ENCODE measurements at regions of chr7 and their contacts with region 1.

Region 1: DNA sequence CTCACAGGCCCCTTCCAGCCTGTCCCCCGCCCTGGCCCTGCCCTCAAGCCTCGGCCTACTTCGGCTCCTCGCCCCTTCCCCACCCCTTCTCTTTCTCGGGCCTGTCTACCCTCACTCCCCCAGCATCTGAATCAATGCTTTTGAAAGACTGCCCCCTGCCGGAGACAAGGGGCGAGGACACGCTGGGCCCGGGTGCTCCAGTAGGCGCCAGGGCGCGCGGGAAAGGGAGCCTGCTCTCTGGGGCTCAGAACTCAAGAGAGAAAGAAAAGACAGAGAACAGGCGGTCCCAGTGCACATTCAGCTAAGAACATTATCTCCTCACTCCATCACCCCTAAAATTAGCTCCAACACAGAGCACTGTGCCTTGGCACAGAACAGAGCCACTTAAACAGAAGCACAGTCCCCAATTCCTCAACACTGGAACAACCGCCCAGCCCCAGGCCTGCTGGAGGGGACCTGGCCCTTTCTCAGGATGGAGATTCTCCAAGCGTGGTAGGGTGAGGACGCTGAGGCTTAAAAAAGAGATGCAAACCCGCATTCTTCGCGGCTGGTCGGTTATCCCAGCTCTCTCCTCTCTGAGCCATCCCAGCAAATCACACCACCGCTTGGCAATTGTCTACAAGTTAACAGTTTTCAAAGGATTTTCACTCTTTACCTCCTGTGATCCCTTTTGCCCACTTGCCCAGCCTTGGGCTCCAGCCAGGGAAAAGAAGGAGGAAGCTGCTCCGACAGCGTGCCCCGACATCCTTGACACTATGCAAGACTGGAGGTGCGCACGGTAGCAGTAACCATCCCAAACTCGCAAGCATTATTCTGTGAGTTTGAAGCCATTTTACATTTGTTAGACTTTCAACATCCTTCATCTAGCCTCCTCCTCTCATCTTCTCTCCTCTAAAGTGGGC is 2.1 kb downstream of the GIGYF1 start:
- DNase-seq: peak; percentile 74
- H3K4me3 Mint-ChIP-seq: peak overlapping the region; percentile 94
- H3K27ac Mint-ChIP-seq: peak overlapping the region; percentile 45
- H3K4me1 Mint-ChIP-seq: peaks cover 27% of the 10 kb centered on the region
- H3K27me3 Mint-ChIP-seq: peaks cover 16% of the 10 kb centered on the region

Region 2: DNA sequence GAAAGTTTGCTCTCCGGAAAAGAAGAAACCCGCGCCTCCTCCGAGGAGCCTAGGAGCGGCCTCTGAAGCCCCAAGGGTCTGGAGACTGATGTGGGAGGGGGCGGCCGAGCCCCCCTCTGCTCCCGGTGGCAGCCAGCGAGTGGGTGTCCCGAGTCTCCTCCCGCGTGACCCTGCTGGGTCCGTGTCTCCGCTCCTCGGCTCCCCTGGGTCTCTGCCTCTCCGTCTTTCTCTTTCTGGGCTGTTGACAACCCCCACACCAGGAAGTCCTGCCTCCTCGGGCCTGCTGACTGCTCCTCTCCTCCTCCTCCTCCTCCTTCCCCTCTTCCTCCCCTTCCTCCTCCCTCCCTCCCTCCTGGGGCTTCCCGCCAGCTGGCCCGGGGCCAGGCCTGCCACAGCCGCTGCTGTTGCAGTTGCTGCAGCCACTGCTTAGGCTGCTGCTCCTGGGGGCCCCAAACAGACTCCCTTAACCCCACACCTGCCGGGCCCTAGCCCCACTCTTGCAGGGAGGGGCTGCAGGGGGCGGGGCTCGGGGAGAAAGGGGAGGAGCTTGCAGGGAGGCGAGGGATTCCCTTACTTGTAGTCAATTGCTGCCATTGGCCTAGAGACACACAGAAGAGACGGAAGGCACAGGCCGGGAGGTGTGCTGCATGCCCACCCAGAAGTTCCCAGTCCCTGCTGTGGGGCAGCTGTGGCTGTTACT is 212.8 kb before region 1 on chr7 and contains the start of gene TSC22D4:
- intact Hi-C with region 1: loop called (anchors 5 kb)
- DNase-seq: peak; percentile 85
- H3K4me3 Mint-ChIP-seq: peak within 1 kb of the TSS; percentile 99
- H3K27ac Mint-ChIP-seq: peak within 1 kb of the TSS; percentile 93
- H3K4me1 Mint-ChIP-seq: peaks cover 35% of the 10 kb centered on the region
- H3K27me3 Mint-ChIP-seq: peaks cover 6% of the 10 kb centered on the region
- total RNA-seq, gene TSC22D4: 126 and 134 TPM in 2 replicates

Region 3: DNA sequence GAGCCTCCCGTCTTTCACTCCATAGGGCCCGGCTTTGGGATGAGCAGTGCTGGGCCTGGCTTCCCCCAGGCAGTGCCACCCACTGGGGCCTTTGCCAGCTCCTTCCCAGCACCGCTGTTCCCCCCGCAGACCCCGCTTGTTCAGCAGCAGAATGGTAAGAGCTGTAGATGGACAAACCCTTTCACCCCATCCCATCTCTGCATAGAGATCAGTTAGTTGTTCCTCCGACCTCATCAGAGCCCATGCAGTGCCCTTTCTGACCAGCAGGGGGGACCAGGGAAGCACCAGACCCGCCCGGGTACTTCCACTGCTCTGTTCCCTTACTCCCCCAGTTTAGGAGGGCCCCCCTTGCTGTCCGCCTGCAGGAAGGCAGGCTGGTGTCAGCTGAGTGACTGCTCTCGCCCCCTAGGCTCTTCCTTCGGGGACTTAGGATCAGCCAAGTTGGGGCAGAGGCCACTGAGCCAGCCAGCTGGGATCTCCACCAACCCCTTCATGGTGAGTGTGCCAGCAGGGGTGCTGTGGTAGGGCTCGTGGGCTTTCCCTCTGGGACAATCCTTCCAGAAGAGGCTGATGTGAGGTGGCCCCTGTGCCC is 128.0 kb before region 1 on chr7:
- intact Hi-C with region 1: loop called (anchors 1 kb)
- DNase-seq: peak; percentile 69
- H3K4me3 Mint-ChIP-seq: no peak overlapping the region
- H3K27ac Mint-ChIP-seq: peak overlapping the region; percentile 24
- H3K4me1 Mint-ChIP-seq: peaks cover 33% of the 10 kb centered on the region
- H3K27me3 Mint-ChIP-seq: no peaks in the 10 kb centered on the region

Region 4: GRCh38 chr7:100604028-100604975 is 87.6 kb before region 1 on chr7:
- intact Hi-C with region 1: loop called (anchors 1 kb)
- DNase-seq: peak; percentile 61
- H3K4me3 Mint-ChIP-seq: peak overlapping the region; percentile 81
- H3K27ac Mint-ChIP-seq: peak overlapping the region; percentile 84
- H3K4me1 Mint-ChIP-seq: peaks cover 15% of the 10 kb centered on the region
- H3K27me3 Mint-ChIP-seq: peaks cover 13% of the 10 kb centered on the region

Region 5: DNA sequence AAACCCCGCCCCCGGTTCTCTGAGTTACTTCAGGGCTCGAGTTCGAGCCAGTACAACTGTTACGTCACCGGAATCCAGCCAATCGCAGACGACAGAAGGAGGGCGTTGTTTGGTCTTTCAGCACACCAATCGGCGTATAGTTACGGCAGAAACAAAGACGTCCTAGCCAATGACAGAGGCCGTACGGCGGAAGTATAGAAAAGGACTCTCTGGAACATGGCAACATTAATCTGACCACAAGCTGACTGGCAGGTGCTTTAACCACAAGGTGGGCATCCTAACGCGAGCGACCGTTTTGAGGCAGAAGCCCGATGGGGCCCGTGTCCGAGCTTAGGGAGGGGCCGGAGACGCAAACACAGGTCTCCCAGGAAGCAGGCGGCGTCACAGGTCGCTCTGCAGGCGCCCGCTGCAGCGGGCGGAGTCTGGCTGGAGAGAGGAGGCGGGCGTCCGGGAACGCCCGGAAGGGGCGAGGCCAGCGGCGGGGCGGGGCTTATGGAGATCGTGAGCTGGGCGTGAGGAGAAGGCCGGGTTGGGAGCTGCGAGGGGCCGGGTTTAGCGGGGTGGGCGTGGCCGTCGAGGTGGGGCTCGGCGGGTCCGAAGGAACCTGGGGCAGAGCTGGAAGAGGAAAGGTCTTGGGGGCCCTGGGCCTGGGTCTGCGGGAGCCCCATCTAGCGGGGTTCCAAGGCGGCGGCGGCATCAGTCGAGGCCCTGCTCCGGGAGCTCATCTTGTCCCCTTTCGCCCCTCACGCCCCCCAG is 79.8 kb before region 1 on chr7 and contains the start of gene MOSPD3:
- intact Hi-C with region 1: loop called (anchors 1 kb)
- DNase-seq: peak; percentile 97
- H3K4me3 Mint-ChIP-seq: peak within 1 kb of the TSS; percentile 98
- H3K27ac Mint-ChIP-seq: peak within 1 kb of the TSS; percentile 100
- H3K4me1 Mint-ChIP-seq: peaks cover 22% of the 10 kb centered on the region
- H3K27me3 Mint-ChIP-seq: peaks cover 8% of the 10 kb centered on the region
- total RNA-seq, gene MOSPD3: 10.3 and 11.5 TPM in 2 replicates

Region 6: GRCh38 chr7:100626530-100627237 is 65.2 kb before region 1 on chr7:
- intact Hi-C with region 1: loop called (anchors 2 kb)
- DNase-seq: peak; percentile 79
- H3K4me3 Mint-ChIP-seq: peak overlapping the region; percentile 71
- H3K27ac Mint-ChIP-seq: peak overlapping the region; percentile 63
- H3K4me1 Mint-ChIP-seq: peaks cover 45% of the 10 kb centered on the region
- H3K27me3 Mint-ChIP-seq: no peaks in the 10 kb centered on the region

Region 7: GRCh38 chr7:100632951-100633717 is 58.8 kb before region 1 on chr7:
- intact Hi-C with region 1: loop called (anchors 1 kb)
- DNase-seq: peak; percentile 57
- H3K4me3 Mint-ChIP-seq: peak overlapping the region; percentile 92
- H3K27ac Mint-ChIP-seq: peak overlapping the region; percentile 92
- H3K4me1 Mint-ChIP-seq: peaks cover 21% of the 10 kb centered on the region
- H3K27me3 Mint-ChIP-seq: no peaks in the 10 kb centered on the region

Region 8: DNA sequence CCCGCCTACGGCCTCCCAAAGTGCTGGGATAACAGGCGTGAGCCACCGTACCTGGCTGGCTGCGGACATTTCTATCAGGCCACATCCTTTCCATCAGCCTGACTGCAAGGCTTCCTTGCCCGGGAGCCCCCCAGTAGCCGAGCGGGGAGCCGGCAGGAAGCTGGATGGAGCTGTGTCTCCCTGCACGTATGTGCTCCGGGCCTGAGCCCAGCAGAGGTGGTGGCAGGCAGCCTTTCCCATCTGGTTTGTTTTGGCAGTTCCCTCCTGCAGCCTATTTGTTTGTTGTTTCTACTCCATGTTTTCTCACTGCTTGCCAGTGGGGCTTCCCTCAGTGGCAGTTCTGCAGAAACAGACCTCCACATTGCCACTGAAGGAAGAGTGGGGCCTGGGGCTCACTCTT is 19.4 kb after region 1 on chr7:
- intact Hi-C with region 1: no loop called
- DNase-seq: no peak
- H3K4me3 Mint-ChIP-seq: no peak overlapping the region
- H3K27ac Mint-ChIP-seq: no peak overlapping the region
- H3K4me1 Mint-ChIP-seq: peaks cover 7% of the 10 kb centered on the region
- H3K27me3 Mint-ChIP-seq: peaks cover 6% of the 10 kb centered on the region

Measured in activated T-helper 1 cell treated with anti-CD3 and anti-CD28 coated beads, Interleukin-12 subunit alpha, Interleukin-12 subunit beta, Interleukin-2, Interleukin-4 antibody, amounts not matched to agents 30 ng/mL and 10 ng/mL and 1 ng/mL, durations not matched to agents 14 hours and 24 hours and 36 hours (primary cell).